Sciatic nerve (tissue), 2 donors: ENCODE measurements at regions of chr20 and their contacts with region 1.

Region 1: GRCh38 chr20:56004007-56004406 is 1.3 kb downstream of the CBLN4 start:
- DNase-seq: no peak
- ATAC-seq: peak; percentile 68

Region 2: GRCh38 chr20:56664791-56665190 is 660.8 kb after region 1 on chr20:
- intact Hi-C with region 1: loop called (anchors 5 kb)
- DNase-seq: no peak
- ATAC-seq: no peak